Pancreas (tissue), 10 donors: ENCODE measurements at regions of chr1 and their contacts with region 1.

Region 1: GRCh38 chr1:39919545-39919944 is 17.8 kb upstream of the MYCL start:
- DNase-seq: peak in 2 of 6 donors; percentile 35 to 55
- ATAC-seq: peak; percentile 95 to 100 (median 99)
- H3K4me3 ChIP-seq: no peak overlapping the region
- H3K27ac ChIP-seq: no peak overlapping the region
- H3K4me1 ChIP-seq: no peaks in the 10 kb centered on the region
- H3K27me3 ChIP-seq: no peaks in the 10 kb centered on the region
- CTCF ChIP-seq: peak; percentile 30 to 59 (median 49)

Region 2: GRCh38 chr1:39960431-39960958 is 41.0 kb after region 1 on chr1:
- intact Hi-C with region 1: loop called in 1 of 3 experiments (anchors 10 kb)
- DNase-seq: peak in 5 of 6 donors; percentile 29 to 77 (median 56)
- ATAC-seq: peak in 3 of 4 donors; percentile 50 to 63 (median 50)
- H3K4me3 ChIP-seq: no peak overlapping the region
- H3K27ac ChIP-seq: no peak overlapping the region
- H3K4me1 ChIP-seq: peaks cover 0 to 7% (median 7%) of the 10 kb centered on the region in 3 donors
- H3K27me3 ChIP-seq: no peaks in the 10 kb centered on the region
- CTCF ChIP-seq: no peak